Thyroid gland (tissue), 4 donors: ENCODE measurements at regions of chr6 and their contacts with region 1.

Region 1: DNA sequence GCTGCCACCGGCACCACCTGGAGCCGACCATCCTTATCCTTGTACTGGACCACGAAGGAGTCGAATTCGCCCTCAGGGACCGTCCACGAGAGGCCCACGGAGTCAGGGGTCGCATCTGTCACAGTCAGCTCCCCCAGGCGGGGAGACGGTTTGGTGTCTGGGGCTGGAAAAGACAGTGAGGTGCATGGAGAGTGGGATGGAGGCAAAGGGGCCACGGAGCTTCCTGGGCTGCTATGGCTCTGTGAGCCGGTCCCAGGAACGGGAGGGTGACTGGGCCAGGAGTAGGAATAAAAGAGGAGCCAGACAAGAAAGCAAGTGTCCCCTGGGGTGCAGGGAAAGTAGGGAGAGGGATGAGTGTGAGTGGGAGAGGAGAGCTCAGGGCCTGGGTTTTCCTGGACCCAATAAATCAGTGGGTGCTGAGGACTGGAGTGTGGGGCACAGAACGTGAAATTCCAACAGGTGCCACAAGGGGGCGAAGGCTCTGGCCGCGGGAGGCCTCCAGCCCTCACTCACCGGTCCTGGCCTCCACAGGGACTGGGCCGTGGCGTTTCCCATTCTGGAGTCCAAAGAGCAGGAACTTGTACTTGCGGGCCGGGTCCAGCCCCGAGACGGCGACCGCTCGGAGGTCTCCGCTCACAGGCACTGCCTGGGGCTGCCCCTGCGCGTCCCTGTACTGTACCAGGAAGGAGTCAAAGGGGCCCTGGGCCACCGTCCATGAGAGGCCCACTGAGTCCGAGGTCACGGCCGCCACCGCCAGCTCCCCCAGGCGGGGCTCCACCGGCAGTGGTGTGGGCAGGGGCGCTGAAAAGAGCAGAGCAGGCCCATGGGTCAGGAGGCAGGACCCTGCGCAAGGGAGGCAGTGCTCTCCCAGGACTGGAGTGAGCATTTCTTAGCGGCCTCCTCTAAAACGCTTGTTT is 9.9 kb downstream of the CYP21A2 start:
- DNase-seq: peak; percentile 63 to 68
- H3K4me3 ChIP-seq: no peak overlapping the region
- H3K27ac ChIP-seq: peak overlapping the region in 2 of 3 donors; percentile 52 to 82
- H3K4me1 ChIP-seq: peaks cover 0 to 27% of the 10 kb centered on the region in 2 donors
- H3K27me3 ChIP-seq: no peaks in the 10 kb centered on the region
- CTCF ChIP-seq: peak; percentile 68 to 93 (median 80)
- POLR2A ChIP-seq: no peak

Region 2: DNA sequence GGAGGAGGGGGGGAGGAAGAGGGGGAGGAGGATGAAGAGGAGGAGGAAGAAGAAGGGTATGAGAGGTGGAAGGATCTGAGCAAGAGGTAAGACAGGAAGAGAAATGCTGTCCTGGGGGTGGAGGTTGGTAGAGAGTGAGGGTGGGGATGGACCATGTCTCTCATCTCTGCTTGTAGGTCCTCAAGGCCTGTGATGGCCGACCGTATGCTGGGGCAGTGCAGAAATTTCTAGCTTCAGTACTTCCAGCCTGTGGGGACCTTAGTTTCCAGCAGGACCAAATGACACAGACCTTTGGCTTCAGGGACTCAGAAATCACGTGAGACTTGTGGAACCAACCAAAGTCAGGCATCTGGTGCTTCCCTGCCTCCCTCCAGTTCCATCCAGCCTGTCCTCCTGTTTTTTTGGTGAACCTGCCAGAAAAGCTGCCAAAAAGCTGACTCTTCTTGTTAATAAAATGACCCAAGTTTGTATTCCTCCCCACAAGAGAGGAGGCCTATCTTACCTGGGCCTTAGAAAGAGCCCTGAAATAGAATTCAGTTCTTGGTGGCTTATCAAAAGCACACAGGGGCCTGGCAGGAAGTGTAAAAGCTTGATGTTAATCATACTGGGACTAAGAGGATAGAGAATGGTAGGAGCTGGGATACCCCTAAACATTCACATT is 68.7 kb before region 1 on chr6:
- intact Hi-C with region 1: no loop called
- DNase-seq: no peak
- H3K4me3 ChIP-seq: no peak overlapping the region
- H3K27ac ChIP-seq: no peak overlapping the region
- H3K4me1 ChIP-seq: no peaks in the 10 kb centered on the region
- H3K27me3 ChIP-seq: no peaks in the 10 kb centered on the region
- CTCF ChIP-seq: no peak
- POLR2A ChIP-seq: no peak

Region 3: GRCh38 chr6:32081168-32081990 is 33.3 kb after region 1 on chr6:
- intact Hi-C with region 1: no loop called
- DNase-seq: peak in 1 of 2 donors; percentile 25
- H3K4me3 ChIP-seq: no peak overlapping the region
- H3K27ac ChIP-seq: peak overlapping the region in 2 of 3 donors; percentile 46 to 52
- H3K4me1 ChIP-seq: peaks cover 0 to 17% of the 10 kb centered on the region in 2 donors
- H3K27me3 ChIP-seq: no peaks in the 10 kb centered on the region
- CTCF ChIP-seq: no peak
- POLR2A ChIP-seq: no peak

Region 4: DNA sequence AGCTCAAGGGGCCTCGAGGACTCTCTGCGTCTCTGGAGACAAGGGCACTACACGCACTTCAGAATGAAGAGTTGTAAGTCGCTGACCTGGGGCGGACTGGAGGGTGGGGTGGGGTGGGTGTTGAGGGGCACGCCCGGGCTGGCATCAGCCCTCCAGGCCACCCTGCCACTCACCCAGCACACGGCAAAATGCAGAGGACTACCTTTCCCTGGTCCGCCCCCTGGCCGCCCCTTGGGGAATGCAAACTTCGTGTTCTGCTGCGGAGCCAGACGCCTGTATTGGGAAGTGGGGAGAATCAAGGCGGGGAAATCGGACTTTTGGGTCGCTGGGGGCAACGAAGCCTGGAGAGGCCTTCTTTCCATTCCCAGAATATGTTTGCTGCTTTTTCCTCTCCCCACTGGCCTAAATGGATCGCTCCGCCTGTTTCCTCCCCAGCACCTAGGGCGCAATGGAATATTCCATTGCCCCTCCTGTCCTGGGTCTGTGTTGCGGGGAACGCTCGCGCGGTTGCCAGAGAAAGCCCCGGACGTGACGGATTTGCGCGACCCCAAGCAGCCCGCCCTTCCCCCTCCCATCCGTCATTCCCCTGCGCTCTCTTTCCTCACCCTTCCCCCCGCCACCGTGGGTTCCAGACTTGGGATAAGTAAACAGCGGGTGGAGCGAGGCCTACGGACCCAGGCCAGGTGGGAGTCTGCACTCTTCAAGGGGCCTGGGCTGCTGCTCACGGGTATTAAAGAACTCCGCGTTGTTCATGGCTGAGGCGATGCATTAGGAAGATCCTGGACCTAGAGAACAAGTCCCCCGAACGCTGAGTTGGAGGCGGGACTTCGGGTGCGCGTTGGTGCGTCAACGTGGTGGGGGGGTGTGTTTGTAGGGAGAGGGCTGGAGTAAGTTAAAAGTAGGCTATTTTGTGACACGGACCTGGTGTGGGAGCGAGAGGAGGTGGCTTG is 105.7 kb after region 1 on chr6 and contains the start of gene PPT2:
- intact Hi-C with region 1: loop called (anchors 10 kb)
- DNase-seq: peak; percentile 86 to 93
- H3K4me3 ChIP-seq: peak within 1 kb of the TSS; percentile 51 to 92 (median 57)
- H3K27ac ChIP-seq: peak within 1 kb of the TSS; percentile 68 to 95 (median 95)
- H3K4me1 ChIP-seq: peaks cover 25 to 26% of the 10 kb centered on the region in 2 donors
- H3K27me3 ChIP-seq: no peaks in the 10 kb centered on the region
- CTCF ChIP-seq: peak in 4 of 6 experiments; percentile 6 to 32 (median 27)
- POLR2A ChIP-seq: peak in 1 of 2 donors; percentile 60
- total RNA-seq, gene PPT2: 13.0 to 26.1 (median 24.1) TPM